Activated naive CD4-positive, alpha-beta T cell treated with anti-CD3 and anti-CD28 coated beads, Interleukin-2, amount 10 ng/mL, durations not matched to agents 7 days and 5 days (primary cell): ENCODE measurements at regions of chr9 and their contacts with region 1.

Region 1: GRCh38 chr9:69193685-69194032 is 19.6 kb downstream of the TJP2 start:
- DNase-seq: no peak
- H3K4me3 Mint-ChIP-seq: no peak overlapping the region
- H3K27ac Mint-ChIP-seq: no peak overlapping the region
- H3K4me1 Mint-ChIP-seq: peaks cover 26% of the 10 kb centered on the region
- H3K27me3 Mint-ChIP-seq: no peaks in the 10 kb centered on the region

Region 2: DNA sequence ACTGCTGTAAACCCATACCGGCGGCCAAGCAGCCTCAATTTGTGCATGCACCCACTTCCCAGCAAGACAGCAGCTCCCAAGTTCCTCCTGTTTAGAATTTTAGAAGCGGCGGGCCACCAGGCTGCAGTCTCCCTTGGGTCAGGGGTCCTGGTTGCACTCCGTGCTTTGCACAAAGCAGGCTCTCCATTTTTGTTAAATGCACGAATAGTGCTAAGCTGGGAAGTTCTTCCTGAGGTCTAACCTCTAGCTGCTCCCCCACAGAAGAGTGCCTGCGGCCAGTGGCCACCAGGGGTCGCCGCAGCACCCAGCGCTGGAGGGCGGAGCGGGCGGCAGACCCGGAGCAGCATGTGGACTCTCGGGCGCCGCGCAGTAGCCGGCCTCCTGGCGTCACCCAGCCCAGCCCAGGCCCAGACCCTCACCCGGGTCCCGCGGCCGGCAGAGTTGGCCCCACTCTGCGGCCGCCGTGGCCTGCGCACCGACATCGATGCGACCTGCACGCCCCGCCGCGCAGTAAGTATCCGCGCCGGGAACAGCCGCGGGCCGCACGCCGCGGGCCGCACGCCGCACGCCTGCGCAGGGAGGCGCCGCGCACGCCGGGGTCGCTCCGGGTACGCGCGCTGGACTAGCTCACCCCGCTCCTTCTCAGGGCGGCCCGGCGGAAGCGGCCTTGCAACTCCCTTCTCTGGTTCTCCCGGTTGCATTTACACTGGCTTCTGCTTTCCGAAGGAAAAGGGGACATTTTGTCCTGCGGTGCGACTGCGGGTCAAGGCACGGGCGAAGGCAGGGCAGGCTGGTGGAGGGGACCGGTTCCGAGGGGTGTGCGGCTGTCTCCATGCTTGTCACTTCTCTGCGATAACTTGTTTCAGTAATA is 158.0 kb before region 1 on chr9 and contains the start of gene FXN:
- CTCF ChIA-PET with region 1: interaction called, 32 read pairs
- DNase-seq: peak; percentile 83
- H3K4me3 Mint-ChIP-seq: peak within 1 kb of the TSS; percentile 93
- H3K27ac Mint-ChIP-seq: peak within 1 kb of the TSS; percentile 88
- H3K4me1 Mint-ChIP-seq: peaks cover 50% of the 10 kb centered on the region
- H3K27me3 Mint-ChIP-seq: no peaks in the 10 kb centered on the region

Region 3: GRCh38 chr9:69044240-69045219 is 149.1 kb before region 1 on chr9:
- CTCF ChIA-PET with region 1: interaction called, 12 read pairs
- DNase-seq: peak; percentile 25
- H3K4me3 Mint-ChIP-seq: no peak overlapping the region
- H3K27ac Mint-ChIP-seq: peak overlapping the region; percentile 66
- H3K4me1 Mint-ChIP-seq: peaks cover 22% of the 10 kb centered on the region
- H3K27me3 Mint-ChIP-seq: no peaks in the 10 kb centered on the region

Region 4: GRCh38 chr9:69180670-69181069 is 13.0 kb before region 1 on chr9:
- CTCF ChIA-PET with region 1: interaction called, 20 read pairs
- DNase-seq: peak; percentile 60
- H3K4me3 Mint-ChIP-seq: no peak overlapping the region
- H3K27ac Mint-ChIP-seq: peak overlapping the region; percentile 76
- H3K4me1 Mint-ChIP-seq: peaks cover 53% of the 10 kb centered on the region
- H3K27me3 Mint-ChIP-seq: no peaks in the 10 kb centered on the region